MCF 10A (cell line): ENCODE measurements at regions of chr12 and their contacts with region 1.

Region 1: GRCh38 chr12:56593909-56594621 is 36.1 kb downstream of the BAZ2A start:
- DNase-seq: peak; percentile 62
- H3K4me3 Mint-ChIP-seq: no peak overlapping the region
- H3K27ac Mint-ChIP-seq: peak overlapping the region; percentile 77
- H3K4me1 Mint-ChIP-seq: peaks cover 10% of the 10 kb centered on the region
- H3K27me3 Mint-ChIP-seq: no peaks in the 10 kb centered on the region
- CTCF ChIP-seq: peak; percentile 82

Region 2: DNA sequence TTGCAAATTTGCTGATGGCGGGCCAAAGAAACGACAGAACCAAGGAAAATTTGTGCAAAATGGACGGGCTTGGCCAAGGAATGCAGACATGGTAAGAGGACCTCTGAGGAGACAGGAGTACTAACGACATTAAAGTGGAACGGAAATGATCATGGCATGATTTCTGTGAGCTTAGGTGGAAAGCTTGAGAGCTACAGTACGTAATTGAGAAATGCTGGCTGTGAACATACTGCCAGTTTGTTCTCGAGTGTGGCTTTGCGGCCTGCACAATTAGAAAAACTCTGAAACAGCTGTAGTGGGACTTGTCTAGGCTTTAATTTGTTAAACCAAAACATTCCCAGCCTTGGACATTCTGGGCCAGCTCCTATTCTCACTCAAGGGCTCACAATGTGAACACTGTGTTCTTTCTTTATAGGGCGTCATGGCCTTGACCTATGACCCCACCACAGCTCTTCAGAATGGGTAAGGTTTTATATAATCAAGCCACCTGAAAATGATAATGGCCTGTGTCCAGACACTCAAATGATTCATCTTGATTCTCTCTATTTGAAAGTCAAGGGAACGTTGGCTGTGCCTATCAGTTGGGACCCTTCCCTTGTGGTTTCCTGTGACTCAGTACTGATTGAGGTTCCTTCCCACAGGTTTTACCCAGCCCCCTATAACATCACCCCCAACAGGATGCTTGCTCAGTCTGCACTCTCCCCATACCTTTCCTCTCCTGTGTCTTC is 12.5 kb before region 1 on chr12:
- CTCF ChIA-PET with region 1: interaction called, 28 read pairs
- POLR2A ChIA-PET with region 1: interaction called, 9 read pairs
- intact Hi-C with region 1: no loop called
- DNase-seq: peak; percentile 27
- H3K4me3 Mint-ChIP-seq: no peak overlapping the region
- H3K27ac Mint-ChIP-seq: peak overlapping the region; percentile 28
- H3K4me1 Mint-ChIP-seq: peaks cover 12% of the 10 kb centered on the region
- H3K27me3 Mint-ChIP-seq: no peaks in the 10 kb centered on the region
- CTCF ChIP-seq: no peak

Region 3: DNA sequence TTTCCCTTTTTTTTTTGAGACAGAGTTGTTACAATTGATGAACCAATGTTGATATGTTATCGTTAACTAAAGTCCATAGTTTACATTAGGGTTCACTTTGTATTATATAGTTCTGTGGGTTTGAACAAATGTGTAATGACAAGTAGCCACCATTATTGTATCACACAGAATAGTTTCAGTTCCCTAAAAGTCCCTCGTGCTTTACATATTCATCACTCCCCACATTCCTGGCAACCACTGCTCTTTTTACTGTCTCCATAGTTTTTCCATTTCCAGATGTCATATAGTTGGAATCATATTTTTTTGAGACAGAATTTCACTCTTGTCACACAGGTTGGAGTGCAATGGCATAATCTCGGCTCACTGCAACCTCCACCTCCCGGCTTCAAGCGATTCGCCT is 181.6 kb after region 1 on chr12:
- CTCF ChIA-PET with region 1: no interaction called
- POLR2A ChIA-PET with region 1: no interaction called
- intact Hi-C with region 1: no loop called
- DNase-seq: no peak
- H3K4me3 Mint-ChIP-seq: no peak overlapping the region
- H3K27ac Mint-ChIP-seq: no peak overlapping the region
- H3K4me1 Mint-ChIP-seq: peaks cover 5% of the 10 kb centered on the region
- H3K27me3 Mint-ChIP-seq: no peaks in the 10 kb centered on the region
- CTCF ChIP-seq: no peak